CD8-positive, alpha-beta memory T cell (primary cell): ENCODE measurements at regions of chr11 and their contacts with region 1.

Region 1: GRCh38 chr11:35165423-35166368 is 26.7 kb downstream of the CD44 start:
- DNase-seq: peak; percentile 78 to 99 (median 96)
- H3K4me3 ChIP-seq: peak overlapping the region; percentile 51
- H3K4me3 Mint-ChIP-seq: peak overlapping the region; percentile 58 to 91 (median 78)
- H3K27ac ChIP-seq: peak overlapping the region; percentile 96
- H3K27ac Mint-ChIP-seq: peak overlapping the region; percentile 96 to 100 (median 100)
- H3K4me1 ChIP-seq: peaks cover 97% of the 10 kb centered on the region
- H3K4me1 Mint-ChIP-seq: peaks cover 98 to 100% (median 100%) of the 10 kb centered on the region in 3 donors
- H3K27me3 ChIP-seq: no peaks in the 10 kb centered on the region
- H3K27me3 Mint-ChIP-seq: peaks cover 0 to 2% of the 10 kb centered on the region in 2 donors

Region 2: DNA sequence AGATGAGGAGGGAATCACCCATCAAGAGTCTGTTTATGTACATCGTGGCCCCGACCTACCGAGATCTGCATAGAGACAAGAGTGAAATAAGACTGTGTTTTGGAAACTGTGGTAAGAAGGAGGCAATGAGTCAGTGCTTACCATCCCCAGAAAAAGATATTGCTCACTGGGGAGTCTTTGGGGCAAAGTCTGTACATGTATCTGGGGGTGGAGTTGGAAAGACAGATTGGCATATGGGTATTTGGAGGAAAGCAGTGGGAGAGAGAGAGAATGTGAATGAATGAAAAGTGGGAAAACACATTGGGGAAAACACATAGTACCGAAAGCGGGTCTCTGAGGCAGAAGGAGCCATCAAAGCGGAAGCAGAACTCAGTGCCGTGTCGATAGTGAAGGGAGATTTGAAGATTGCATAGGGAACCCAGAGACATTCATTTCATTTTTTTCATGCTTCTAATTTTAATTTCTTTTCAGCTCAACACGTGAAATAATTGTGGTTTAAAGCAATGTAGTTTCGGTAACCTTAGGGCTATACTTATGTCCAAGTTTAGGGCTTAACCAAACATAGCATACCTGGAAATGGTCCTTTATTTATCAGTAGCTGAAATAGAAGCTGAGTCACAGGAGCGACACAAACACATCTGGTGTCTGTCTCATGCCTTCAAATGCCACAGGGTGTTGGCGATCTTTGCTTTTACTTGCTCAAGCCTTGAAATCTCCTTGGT is 125.3 kb before region 1 on chr11:
- CTCF ChIA-PET with region 1: interaction called, 10 read pairs
- POLR2A ChIA-PET with region 1: interaction called, 4 read pairs
- DNase-seq: peak; percentile 38 to 87 (median 52)
- H3K4me3 ChIP-seq: peak overlapping the region; percentile 59
- H3K4me3 Mint-ChIP-seq: peak overlapping the region; percentile 81 to 91 (median 88)
- H3K27ac ChIP-seq: peak overlapping the region; percentile 73
- H3K27ac Mint-ChIP-seq: peak overlapping the region; percentile 89 to 100 (median 98)
- H3K4me1 ChIP-seq: peaks cover 55% of the 10 kb centered on the region
- H3K4me1 Mint-ChIP-seq: peaks cover 33 to 70% (median 58%) of the 10 kb centered on the region in 3 donors
- H3K27me3 ChIP-seq: no peaks in the 10 kb centered on the region
- H3K27me3 Mint-ChIP-seq: peaks cover 0 to 5% of the 10 kb centered on the region in 2 donors

Region 3: DNA sequence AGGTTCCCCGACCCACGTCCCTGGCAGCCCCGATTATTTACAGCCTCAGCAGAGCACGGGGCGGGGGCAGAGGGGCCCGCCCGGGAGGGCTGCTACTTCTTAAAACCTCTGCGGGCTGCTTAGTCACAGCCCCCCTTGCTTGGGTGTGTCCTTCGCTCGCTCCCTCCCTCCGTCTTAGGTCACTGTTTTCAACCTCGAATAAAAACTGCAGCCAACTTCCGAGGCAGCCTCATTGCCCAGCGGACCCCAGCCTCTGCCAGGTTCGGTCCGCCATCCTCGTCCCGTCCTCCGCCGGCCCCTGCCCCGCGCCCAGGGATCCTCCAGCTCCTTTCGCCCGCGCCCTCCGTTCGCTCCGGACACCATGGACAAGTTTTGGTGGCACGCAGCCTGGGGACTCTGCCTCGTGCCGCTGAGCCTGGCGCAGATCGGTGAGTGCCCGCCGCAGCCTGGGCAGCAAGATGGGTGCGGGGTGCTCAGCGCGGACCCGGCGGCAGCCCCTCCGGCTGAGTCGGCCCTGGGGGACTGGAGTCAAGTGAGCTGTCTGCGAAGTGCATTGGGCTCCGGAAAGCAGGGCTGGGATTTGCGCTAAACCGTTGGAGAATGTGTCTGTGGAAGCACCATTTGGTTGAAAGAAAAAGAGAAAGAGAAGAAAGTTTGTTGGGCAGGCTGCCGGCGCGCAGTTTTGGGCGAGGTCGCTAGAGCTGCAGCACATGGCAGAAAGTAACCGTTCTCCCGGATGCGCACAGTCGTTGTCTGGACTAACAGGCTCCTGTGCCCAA is 26.6 kb before region 1 on chr11 and contains the start of gene CD44:
- CTCF ChIA-PET with region 1: interaction called, 14 read pairs
- POLR2A ChIA-PET with region 1: interaction called, 26 read pairs
- DNase-seq: peak; percentile 73 to 94 (median 83)
- H3K4me3 ChIP-seq: peak within 1 kb of the TSS; percentile 82
- H3K4me3 Mint-ChIP-seq: peak within 1 kb of the TSS; percentile 91 to 97 (median 95)
- H3K27ac ChIP-seq: peak within 1 kb of the TSS; percentile 95
- H3K27ac Mint-ChIP-seq: peak within 1 kb of the TSS; percentile 96 to 100 (median 97)
- H3K4me1 ChIP-seq: peaks cover 40% of the 10 kb centered on the region
- H3K4me1 Mint-ChIP-seq: peaks cover 44 to 55% (median 53%) of the 10 kb centered on the region in 3 donors
- H3K27me3 ChIP-seq: no peaks in the 10 kb centered on the region
- H3K27me3 Mint-ChIP-seq: peaks cover 0 to 2% of the 10 kb centered on the region in 2 donors
- total RNA-seq, gene CD44: 510 to 534 TPM

Region 4: GRCh38 chr11:35144136-35144741 is 21.5 kb before region 1 on chr11:
- CTCF ChIA-PET with region 1: interaction called, 14 read pairs
- POLR2A ChIA-PET with region 1: interaction called, 26 read pairs
- DNase-seq: peak; percentile 28 to 80 (median 70)
- H3K4me3 ChIP-seq: peak overlapping the region; percentile 62
- H3K4me3 Mint-ChIP-seq: peak overlapping the region; percentile 91 to 97 (median 95)
- H3K27ac ChIP-seq: peak overlapping the region; percentile 40
- H3K27ac Mint-ChIP-seq: peak overlapping the region; percentile 68 to 98 (median 96)
- H3K4me1 ChIP-seq: peaks cover 75% of the 10 kb centered on the region
- H3K4me1 Mint-ChIP-seq: peaks cover 78 to 83% (median 81%) of the 10 kb centered on the region in 3 donors
- H3K27me3 ChIP-seq: no peaks in the 10 kb centered on the region
- H3K27me3 Mint-ChIP-seq: no peaks in the 10 kb centered on the region

Region 5: DNA sequence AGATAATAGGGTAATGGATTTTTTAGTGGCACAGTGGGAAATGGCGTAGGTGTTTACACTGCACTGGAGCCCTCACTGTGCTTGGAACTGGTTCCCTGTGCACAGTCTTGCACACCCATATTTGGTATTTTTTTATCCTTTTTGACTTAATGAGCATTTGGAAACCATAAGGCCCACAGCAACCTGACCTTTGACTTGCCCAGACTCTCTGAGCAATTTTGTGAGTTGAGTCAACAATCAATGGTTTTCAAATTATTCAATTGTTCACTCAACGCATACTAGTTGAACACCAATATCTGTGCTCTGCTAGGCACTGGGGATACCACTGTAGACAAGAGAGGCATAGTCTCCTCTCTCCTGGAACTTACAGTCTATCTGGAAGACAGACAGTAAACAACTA is 12.4 kb before region 1 on chr11:
- CTCF ChIA-PET with region 1: interaction called, 24 read pairs
- POLR2A ChIA-PET with region 1: interaction called, 5 read pairs
- DNase-seq: no peak
- H3K4me3 ChIP-seq: no peak overlapping the region
- H3K4me3 Mint-ChIP-seq: peak overlapping the region; percentile 10 to 36 (median 23)
- H3K27ac ChIP-seq: no peak overlapping the region
- H3K27ac Mint-ChIP-seq: peak overlapping the region; percentile 43 to 96 (median 81)
- H3K4me1 ChIP-seq: peaks cover 99% of the 10 kb centered on the region
- H3K4me1 Mint-ChIP-seq: peaks cover 98 to 100% (median 100%) of the 10 kb centered on the region in 3 donors
- H3K27me3 ChIP-seq: no peaks in the 10 kb centered on the region
- H3K27me3 Mint-ChIP-seq: peaks cover 0 to 4% of the 10 kb centered on the region in 2 donors

Region 6: GRCh38 chr11:35822815-35823495 is 657.3 kb after region 1 on chr11:
- CTCF ChIA-PET with region 1: no interaction called
- POLR2A ChIA-PET with region 1: no interaction called
- DNase-seq: no peak
- H3K4me3 ChIP-seq: no peak overlapping the region
- H3K4me3 Mint-ChIP-seq: no peak overlapping the region
- H3K27ac ChIP-seq: no peak overlapping the region
- H3K27ac Mint-ChIP-seq: peak overlapping the region in 1 of 8 donors; percentile 45
- H3K4me1 ChIP-seq: peaks cover 6% of the 10 kb centered on the region
- H3K4me1 Mint-ChIP-seq: peaks cover 9 to 15% (median 14%) of the 10 kb centered on the region in 3 donors
- H3K27me3 ChIP-seq: no peaks in the 10 kb centered on the region
- H3K27me3 Mint-ChIP-seq: peaks cover 4 to 10% of the 10 kb centered on the region in 2 donors